ENCODE measurements at regions of chr10 and their contacts with region 1.

Region 1: DNA sequence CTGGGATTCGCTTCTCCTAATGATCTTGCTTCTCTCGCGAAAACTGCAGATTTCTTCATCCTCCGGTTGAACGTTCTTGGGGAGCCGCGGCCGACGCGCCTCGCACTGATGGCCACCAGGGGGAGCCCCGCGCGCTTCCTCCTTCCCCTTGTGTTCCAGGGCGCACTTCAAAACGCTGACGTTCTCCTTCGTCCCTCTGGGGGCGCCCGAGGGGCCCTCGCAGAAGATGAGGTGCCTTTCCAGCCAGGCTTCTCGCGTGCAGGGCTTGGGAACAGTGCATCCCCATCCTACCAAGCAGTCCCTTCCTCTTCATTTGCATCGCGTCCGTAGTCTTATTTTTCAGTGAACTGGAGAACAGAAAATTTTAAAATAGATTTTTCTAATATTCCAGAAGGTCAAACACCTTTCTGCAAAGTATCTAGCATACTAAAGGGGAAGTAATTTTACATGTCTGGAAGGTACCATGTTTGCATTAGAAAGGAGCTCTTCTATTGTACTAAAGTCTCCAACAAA is 22.5 kb downstream of the GSTO2 start:
- DNase-seq: peak; percentile 86 to 88
- ATAC-seq: peak; percentile 97 to 98
- H3K4me3 ChIP-seq: no peak overlapping the region
- H3K27ac ChIP-seq: peak overlapping the region; percentile 12 to 62; a peak in 3 of 6 replicates
- H3K4me1 ChIP-seq: peaks cover 18% of the 10 kb centered on the region
- CTCF ChIP-seq: peak; percentile 99
- EP300 ChIP-seq: no peak
- POLR2A ChIP-seq: no peak
- RAD21 ChIP-seq: peak; percentile 85 to 91

Region 2: GRCh38 chr10:104268716-104269645 is 22.5 kb before region 1 on chr10 and contains the start of gene GSTO2:
- CTCF ChIA-PET with region 1: interaction called, 260 read pairs
- POLR2A ChIA-PET with region 1: interaction called, 3 read pairs
- DNase-seq: peak; percentile 99 to 100
- ATAC-seq: peak; percentile 99 to 100
- H3K4me3 ChIP-seq: peak within 1 kb of the TSS; percentile 68
- H3K27ac ChIP-seq: peak within 1 kb of the TSS; percentile 83 to 91
- H3K4me1 ChIP-seq: peaks cover 13% of the 10 kb centered on the region; the same call in 2 of the 3 replicates
- CTCF ChIP-seq: no peak
- EP300 ChIP-seq: no peak
- POLR2A ChIP-seq: peak; percentile 83
- RAD21 ChIP-seq: no peak
- polyA plus RNA-seq, gene GSTO2: 5.7 and 6.3 TPM in 2 replicates

Region 3: DNA sequence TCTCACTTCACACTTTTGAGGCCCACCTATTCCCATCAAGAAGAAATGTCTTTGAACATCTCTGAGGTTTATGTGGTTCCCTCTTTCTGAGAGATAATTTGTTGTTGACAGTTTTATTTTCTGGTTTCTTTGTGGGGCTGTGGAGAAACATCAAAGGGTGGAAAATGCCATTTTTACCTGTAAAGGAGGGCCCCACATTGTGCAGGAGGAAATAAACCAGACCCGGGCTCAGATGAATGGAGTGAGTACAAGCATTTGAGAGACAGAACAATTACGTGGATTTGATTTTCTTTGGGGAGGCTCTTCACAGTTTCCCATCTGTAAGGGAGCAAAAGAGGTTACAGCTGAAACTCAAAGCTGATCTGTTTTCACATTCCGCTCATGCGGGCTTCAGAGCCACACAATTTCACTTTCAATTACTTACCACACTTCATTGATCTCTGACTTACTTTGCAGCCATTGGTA is 17.0 kb after region 1 on chr10:
- CTCF ChIA-PET with region 1: interaction called, 188 read pairs
- POLR2A ChIA-PET with region 1: no interaction called
- DNase-seq: no peak
- ATAC-seq: no peak
- H3K4me3 ChIP-seq: no peak overlapping the region
- H3K27ac ChIP-seq: no peak overlapping the region
- H3K4me1 ChIP-seq: peaks cover 10% of the 10 kb centered on the region; the same call in 1 of the 3 replicates
- CTCF ChIP-seq: no peak
- EP300 ChIP-seq: no peak
- POLR2A ChIP-seq: no peak
- RAD21 ChIP-seq: no peak

Region 4: DNA sequence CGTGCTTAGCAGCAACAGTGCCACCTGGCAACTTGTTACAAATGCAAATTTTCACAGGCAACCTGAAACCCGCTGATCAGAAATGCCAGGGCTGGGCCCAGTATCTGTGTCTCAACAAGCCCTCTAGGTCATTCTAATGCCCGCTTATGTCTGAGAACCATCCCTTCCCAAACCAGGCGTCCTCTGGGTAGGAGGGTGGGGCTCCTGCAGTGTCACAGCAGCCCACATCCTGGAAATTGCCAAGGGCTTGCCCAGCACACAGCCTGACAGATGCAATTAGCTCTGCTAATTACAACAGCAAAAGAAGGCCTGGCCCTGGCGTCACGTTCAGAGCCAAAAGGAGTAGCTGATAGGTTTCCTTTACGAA is 30.9 kb after region 1 on chr10:
- CTCF ChIA-PET with region 1: interaction called, 31 read pairs
- POLR2A ChIA-PET with region 1: no interaction called
- DNase-seq: no peak
- ATAC-seq: no peak
- H3K4me3 ChIP-seq: no peak overlapping the region
- H3K27ac ChIP-seq: peak overlapping the region in 1 of 2 experiments; percentile 27; a peak in 1 of 6 replicates
- H3K4me1 ChIP-seq: peaks cover 37% of the 10 kb centered on the region
- CTCF ChIP-seq: no peak
- EP300 ChIP-seq: no peak
- POLR2A ChIP-seq: no peak
- RAD21 ChIP-seq: no peak

Region 5: GRCh38 chr10:104328896-104329710 is 37.6 kb after region 1 on chr10:
- CTCF ChIA-PET with region 1: interaction called, 31 read pairs
- POLR2A ChIA-PET with region 1: no interaction called
- DNase-seq: peak; percentile 51 to 90
- ATAC-seq: peak; percentile 78 to 79
- H3K4me3 ChIP-seq: peak overlapping the region; percentile 33; the same call in 2 of the 3 replicates
- H3K27ac ChIP-seq: peak overlapping the region; percentile 93 to 97
- H3K4me1 ChIP-seq: peaks cover 77% of the 10 kb centered on the region
- CTCF ChIP-seq: no peak
- EP300 ChIP-seq: peak; percentile 74 to 76; a peak in 3 of 5 replicates
- POLR2A ChIP-seq: no peak
- RAD21 ChIP-seq: 0 out of 5 replicates have a peak, but pooled peaks of 1 of the 2 experiments have one; percentile 26

Region 6: DNA sequence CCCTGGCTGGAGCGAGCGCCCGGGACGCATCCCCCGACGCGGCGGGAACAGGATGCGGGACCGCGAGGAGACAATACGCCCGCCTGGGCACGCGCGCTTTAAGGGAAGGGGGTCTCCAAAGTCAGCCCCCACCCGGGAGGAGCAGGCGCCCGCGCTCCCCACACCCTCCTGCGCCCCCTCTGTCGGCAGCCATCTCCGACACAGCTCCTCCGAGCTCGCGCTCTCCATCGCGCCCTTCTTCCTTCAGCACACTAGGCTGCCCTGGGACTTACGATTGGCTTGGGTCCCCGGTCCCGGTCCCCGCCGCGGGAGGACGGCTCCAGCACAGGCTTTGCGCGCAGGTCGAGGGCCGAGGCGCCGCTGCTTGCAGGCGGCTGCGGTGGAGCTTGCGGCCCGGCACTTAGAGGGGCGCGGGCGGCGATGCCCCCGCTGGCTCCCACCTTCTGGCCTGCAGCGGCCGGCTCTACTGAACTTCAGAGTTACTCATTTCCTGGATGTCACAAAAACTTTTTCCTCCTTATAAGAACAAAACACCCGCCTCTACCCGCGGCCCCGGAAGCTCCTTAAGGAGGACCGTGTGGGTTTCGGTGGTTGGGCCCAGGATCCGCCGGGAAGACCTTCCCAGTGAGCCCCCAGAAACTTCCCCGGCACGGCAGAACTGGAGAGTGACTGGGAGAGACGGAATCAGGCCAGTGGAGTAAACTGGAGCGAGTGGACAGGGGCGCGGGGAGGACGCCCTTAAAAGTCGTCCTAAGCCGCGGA is 46.7 kb after region 1 on chr10 and contains the start of gene ITPRIP:
- CTCF ChIA-PET with region 1: interaction called, 34 read pairs
- POLR2A ChIA-PET with region 1: interaction called, 3 read pairs
- DNase-seq: peak; percentile 78 to 81
- ATAC-seq: peak; percentile 84 to 87
- H3K4me3 ChIP-seq: peak within 1 kb of the TSS; percentile 67
- H3K27ac ChIP-seq: peak within 1 kb of the TSS; percentile 85 to 93
- H3K4me1 ChIP-seq: peaks cover 40% of the 10 kb centered on the region
- CTCF ChIP-seq: no peak; the same call in 2 of the 3 replicates
- EP300 ChIP-seq: no peak
- POLR2A ChIP-seq: peak; percentile 58
- RAD21 ChIP-seq: no peak
- polyA plus RNA-seq, gene ITPRIP: 14.8 and 17.4 TPM in 2 replicates

Region 7: GRCh38 chr10:104472493-104472892 is 181.0 kb after region 1 on chr10:
- CTCF ChIA-PET with region 1: no interaction called
- POLR2A ChIA-PET with region 1: no interaction called
- DNase-seq: peak in 1 of 2 experiments; percentile 17
- ATAC-seq: peak in 1 of 2 experiments; percentile 47; a peak in 1 of 6 replicates
- H3K4me3 ChIP-seq: no peak overlapping the region
- H3K27ac ChIP-seq: no peak overlapping the region
- H3K4me1 ChIP-seq: no peaks in the 10 kb centered on the region
- CTCF ChIP-seq: no peak
- EP300 ChIP-seq: no peak
- POLR2A ChIP-seq: no peak
- RAD21 ChIP-seq: no peak